AG04449 (cell line): ENCODE measurements at regions of chr3 and their contacts with region 1.

Region 1: GRCh38 chr3:194351952-194352536 is 916 bp upstream of the CPN2 start:
- DNase-seq: no peak
- H3K4me3 ChIP-seq: no peak overlapping the region
- CTCF ChIP-seq: no peak

Region 2: DNA sequence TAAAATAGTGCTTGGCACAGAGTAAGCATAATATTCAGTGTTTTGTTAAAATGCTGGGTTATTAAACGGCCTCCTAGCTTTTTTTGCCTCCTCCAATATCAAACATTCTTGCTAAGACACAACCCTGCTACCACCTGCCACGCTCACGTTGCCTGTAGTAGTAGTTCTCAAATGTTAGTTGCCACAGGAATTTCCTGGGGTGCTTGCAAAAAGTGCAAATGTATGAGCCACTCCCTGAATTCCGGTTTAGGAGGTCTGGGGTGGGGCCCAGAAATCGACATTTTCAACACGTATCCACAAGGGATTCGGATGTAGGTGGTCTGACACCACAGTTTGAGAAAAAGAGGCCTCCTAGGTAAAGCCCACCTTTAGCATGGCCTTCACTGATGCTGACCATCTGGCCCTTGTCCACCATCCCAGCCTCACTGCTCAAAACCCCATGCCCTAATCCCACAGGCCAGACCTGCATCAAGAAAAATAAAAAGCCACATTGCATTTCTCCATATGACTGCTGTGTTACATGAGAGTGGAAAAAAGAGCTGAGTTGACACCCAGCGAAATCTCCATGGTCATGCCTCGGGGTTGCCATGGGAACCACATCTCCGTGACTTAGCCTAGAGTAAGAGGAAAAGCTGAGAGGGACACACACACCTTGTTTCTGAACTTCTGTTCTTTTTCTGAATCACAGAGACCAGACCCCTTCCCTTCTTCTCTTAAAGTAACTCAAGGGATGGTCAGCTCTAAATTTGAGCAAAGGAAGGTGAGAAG is 332.5 kb before region 1 on chr3:
- CTCF ChIA-PET with region 1: no interaction called
- POLR2A ChIA-PET with region 1: no interaction called
- DNase-seq: no peak
- H3K4me3 ChIP-seq: no peak overlapping the region
- CTCF ChIP-seq: no peak

Region 3: DNA sequence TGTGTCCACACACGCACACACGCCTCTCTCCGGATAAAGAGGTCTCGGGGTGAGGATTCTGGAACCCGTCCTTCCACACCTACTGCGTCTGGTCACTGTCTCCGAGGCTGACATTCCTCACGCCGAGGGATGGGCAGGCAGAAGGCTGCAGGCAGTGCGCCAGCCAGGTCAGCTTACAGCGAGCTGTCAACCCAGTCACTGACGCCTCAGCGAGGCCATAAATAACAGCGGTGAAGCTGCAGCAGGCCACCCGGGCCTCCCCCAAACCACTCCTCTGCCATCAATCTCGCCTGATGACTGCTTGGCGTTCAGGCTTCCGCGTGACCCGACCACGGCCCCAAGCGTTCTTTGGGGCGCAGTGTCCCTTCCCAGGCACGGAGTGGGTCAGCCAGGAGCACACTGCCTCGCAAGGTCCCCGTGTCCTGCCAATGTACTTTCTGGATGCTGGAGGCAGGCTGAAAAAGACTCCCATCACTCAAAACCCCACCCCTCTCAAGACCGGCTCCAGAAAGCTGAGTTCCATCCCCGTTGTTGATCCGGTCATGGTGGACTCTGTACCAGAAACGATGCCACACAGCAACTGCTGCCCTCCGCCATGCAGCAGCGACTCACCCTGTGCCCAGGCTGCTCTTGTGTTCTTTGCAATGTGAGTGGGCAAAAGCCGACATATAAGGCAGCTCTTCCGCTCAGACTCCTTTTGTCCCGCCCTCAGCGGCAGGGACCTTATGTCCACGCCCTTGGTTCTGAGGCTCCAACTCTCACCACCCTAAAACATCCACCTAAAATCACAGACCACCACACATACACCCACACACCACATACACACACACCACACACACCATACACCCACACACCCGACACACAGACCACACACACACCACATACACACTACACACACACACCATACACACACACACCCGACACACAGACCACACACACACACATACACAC is 28.0 kb before region 1 on chr3:
- CTCF ChIA-PET with region 1: no interaction called
- POLR2A ChIA-PET with region 1: no interaction called
- DNase-seq: no peak
- H3K4me3 ChIP-seq: peak overlapping the region; percentile 37
- CTCF ChIP-seq: no peak

Region 4: DNA sequence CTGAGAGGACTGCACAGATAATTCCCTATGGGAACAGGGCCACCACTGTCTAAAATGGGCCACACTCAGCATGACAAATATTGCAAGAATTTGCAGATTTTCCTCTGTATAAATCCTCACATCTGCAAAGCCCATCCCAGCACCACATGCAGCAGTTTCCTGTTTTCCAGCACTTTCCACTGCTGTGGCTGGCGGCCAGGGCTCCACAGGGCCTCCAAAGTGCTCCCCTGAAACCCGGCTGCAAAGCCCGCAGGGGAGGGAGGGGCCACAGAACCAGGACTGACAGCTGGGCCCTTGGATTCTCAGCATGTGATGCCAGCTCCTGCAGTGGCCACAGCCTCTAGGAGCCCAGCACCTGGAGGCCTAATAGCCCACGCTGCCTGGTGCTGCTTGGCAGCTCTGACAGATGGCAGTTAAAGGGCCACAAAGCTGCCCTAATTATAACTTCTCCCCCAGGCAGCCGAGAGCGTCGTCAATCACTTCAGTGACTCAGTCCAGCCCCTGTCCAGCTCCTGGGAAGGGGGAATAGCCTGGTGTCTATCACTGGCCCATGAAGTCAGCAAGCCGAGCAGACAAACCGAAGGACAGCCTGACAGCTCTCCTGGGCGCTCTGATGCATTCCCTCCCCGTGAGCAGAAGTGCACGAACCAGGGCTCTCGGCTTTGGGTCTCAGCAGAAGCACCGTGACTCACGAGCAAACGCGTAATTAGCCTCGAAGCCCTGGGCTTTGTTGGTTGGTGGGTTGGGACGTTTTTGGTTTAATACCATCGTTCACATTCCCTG is 12.8 kb after region 1 on chr3:
- CTCF ChIA-PET with region 1: interaction called, 274 read pairs
- POLR2A ChIA-PET with region 1: interaction called, 8 read pairs
- DNase-seq: peak; percentile 69
- H3K4me3 ChIP-seq: peak overlapping the region; percentile 20
- CTCF ChIP-seq: no peak